Activated CD8-positive, alpha-beta memory T cell treated with anti-CD3 and anti-CD28 coated beads, Interleukin-2, amount 10 ng/mL, durations not matched to agents 7 days and 5 days (primary cell): ENCODE measurements at regions of chr1 and their contacts with region 1.

Region 1: GRCh38 chr1:202575918-202576653 is 134.2 kb downstream of the SYT2 start:
- DNase-seq: no peak
- ATAC-seq: no peak
- H3K4me3 Mint-ChIP-seq: no peak overlapping the region
- H3K27ac Mint-ChIP-seq: no peak overlapping the region
- H3K4me1 Mint-ChIP-seq: no peaks in the 10 kb centered on the region
- H3K27me3 Mint-ChIP-seq: no peaks in the 10 kb centered on the region

Region 2: GRCh38 chr1:202438432-202439174 is 137.5 kb before region 1 on chr1:
- CTCF ChIA-PET with region 1: no interaction called
- DNase-seq: no peak
- ATAC-seq: no peak
- H3K4me3 Mint-ChIP-seq: no peak overlapping the region
- H3K27ac Mint-ChIP-seq: no peak overlapping the region
- H3K4me1 Mint-ChIP-seq: no peaks in the 10 kb centered on the region
- H3K27me3 Mint-ChIP-seq: no peaks in the 10 kb centered on the region

Region 3: GRCh38 chr1:202553560-202554038 is 22.5 kb before region 1 on chr1:
- CTCF ChIA-PET with region 1: no interaction called
- DNase-seq: no peak
- ATAC-seq: no peak
- H3K4me3 Mint-ChIP-seq: no peak overlapping the region
- H3K27ac Mint-ChIP-seq: no peak overlapping the region
- H3K4me1 Mint-ChIP-seq: peaks cover 3% of the 10 kb centered on the region
- H3K27me3 Mint-ChIP-seq: no peaks in the 10 kb centered on the region

Region 4: GRCh38 chr1:202586018-202586821 is 10.1 kb after region 1 on chr1:
- CTCF ChIA-PET with region 1: interaction called, 13 read pairs
- DNase-seq: no peak
- ATAC-seq: no peak
- H3K4me3 Mint-ChIP-seq: no peak overlapping the region
- H3K27ac Mint-ChIP-seq: no peak overlapping the region
- H3K4me1 Mint-ChIP-seq: peaks cover 20% of the 10 kb centered on the region
- H3K27me3 Mint-ChIP-seq: no peaks in the 10 kb centered on the region

Region 5: DNA sequence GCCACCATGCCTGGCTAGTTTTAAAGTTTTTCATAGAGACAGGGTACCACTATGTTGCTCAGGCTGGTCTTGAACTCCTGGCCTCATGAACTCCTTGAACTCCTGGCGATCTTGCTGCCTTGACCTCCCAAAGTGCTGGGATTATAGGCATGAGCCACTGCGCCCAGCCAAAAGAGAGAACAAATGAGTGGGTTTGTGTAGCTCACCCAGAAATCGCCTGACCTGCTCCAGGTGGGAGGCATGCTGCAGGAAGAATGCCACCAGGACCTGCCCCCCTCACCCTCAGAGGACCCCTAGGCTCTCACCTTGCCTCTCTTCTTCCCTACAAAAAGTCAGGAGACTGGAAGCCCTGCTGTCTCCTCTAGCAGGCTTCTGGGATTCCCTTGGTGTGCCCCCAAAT is 45.4 kb after region 1 on chr1:
- CTCF ChIA-PET with region 1: no interaction called
- DNase-seq: no peak
- ATAC-seq: no peak
- H3K4me3 Mint-ChIP-seq: no peak overlapping the region
- H3K27ac Mint-ChIP-seq: no peak overlapping the region
- H3K4me1 Mint-ChIP-seq: peaks cover 22% of the 10 kb centered on the region
- H3K27me3 Mint-ChIP-seq: peaks cover 58% of the 10 kb centered on the region